Esophagus muscularis mucosa (tissue), 4 donors: ENCODE measurements at regions of chr11 and their contacts with region 1.

Region 1: GRCh38 chr11:38791302-38791961 is 2193.4 kb upstream of the RAG2 start:
- DNase-seq: no peak
- H3K4me3 ChIP-seq: no peak overlapping the region
- H3K27ac ChIP-seq: no peak overlapping the region
- H3K4me1 ChIP-seq: no peaks in the 10 kb centered on the region
- H3K27me3 ChIP-seq: no peaks in the 10 kb centered on the region
- CTCF ChIP-seq: peak; percentile 54 to 78 (median 71)
- EP300 ChIP-seq: no peak
- POLR2A ChIP-seq: no peak

Region 2: DNA sequence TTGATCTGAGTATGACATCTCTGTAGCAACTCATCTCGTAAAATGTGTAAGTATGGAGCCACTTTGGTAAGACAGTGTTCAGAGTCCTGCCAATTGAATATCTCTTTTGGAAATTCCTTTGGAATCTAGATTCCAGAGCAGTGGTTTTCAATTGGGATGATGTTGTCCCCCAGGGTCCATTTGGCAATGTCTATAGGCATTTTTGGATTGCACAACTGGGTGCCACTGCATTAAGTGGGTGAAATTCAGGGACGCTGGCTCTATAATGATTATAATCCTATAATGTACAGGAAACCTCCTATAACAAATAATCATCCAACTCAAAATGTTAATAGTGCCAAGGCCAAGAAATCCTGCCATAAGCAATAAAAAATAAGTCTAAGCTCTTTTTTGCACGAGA is 1788.6 kb before region 1 on chr11:
- intact Hi-C with region 1: loop called (anchors 10 kb)
- DNase-seq: no peak
- H3K4me3 ChIP-seq: no peak overlapping the region
- H3K27ac ChIP-seq: no peak overlapping the region
- H3K4me1 ChIP-seq: no peaks in the 10 kb centered on the region
- H3K27me3 ChIP-seq: no peaks in the 10 kb centered on the region
- CTCF ChIP-seq: no peak
- EP300 ChIP-seq: no peak
- POLR2A ChIP-seq: no peak

Region 3: DNA sequence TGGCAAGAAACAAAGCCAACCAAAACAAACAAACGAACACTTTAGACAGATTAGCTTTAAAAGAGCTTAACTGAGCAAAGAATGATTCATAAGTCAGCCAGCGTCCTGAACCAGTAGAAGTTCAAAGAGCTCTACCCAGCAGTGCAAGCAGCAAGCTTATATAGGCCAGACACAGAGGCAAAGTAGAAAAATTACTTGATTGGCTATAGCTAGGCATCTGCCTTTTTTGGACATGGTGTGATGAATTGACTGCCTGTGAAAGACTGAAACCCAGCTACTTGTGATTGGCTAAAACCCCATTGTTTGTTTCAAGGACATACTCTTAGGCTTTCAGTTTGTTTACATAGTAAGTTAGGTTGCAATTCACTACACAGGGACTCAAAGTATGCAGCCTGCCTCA is 73.4 kb before region 1 on chr11:
- intact Hi-C with region 1: no loop called
- DNase-seq: no peak
- H3K4me3 ChIP-seq: no peak overlapping the region
- H3K27ac ChIP-seq: no peak overlapping the region
- H3K4me1 ChIP-seq: peaks cover 0 to 17% (median 8%) of the 10 kb centered on the region in 4 donors
- H3K27me3 ChIP-seq: no peaks in the 10 kb centered on the region
- CTCF ChIP-seq: no peak
- EP300 ChIP-seq: no peak
- POLR2A ChIP-seq: no peak